Activated CD4-positive, alpha-beta T cell treated with anti-CD3 and anti-CD28 coated beads, Interleukin-2, amount 10 ng/mL, durations not matched to agents 7 days and 5 days (primary cell): ENCODE measurements at regions of chr12 and their contacts with region 1.

Region 1: GRCh38 chr12:54419088-54419892 is at the start of gene ITGA5:
- DNase-seq: peak; percentile 36
- H3K4me3 Mint-ChIP-seq: peak within 1 kb of the TSS; percentile 98
- H3K27ac Mint-ChIP-seq: peak within 1 kb of the TSS; percentile 94
- H3K4me1 Mint-ChIP-seq: peaks cover 57% of the 10 kb centered on the region
- H3K27me3 Mint-ChIP-seq: peaks cover 32% of the 10 kb centered on the region
- total RNA-seq, gene ITGA5: 83.5 to 88.7 TPM

Region 2: GRCh38 chr12:54386403-54387113 is 32.7 kb before region 1 on chr12:
- CTCF ChIA-PET with region 1: no interaction called
- POLR2A ChIA-PET with region 1: no interaction called
- DNase-seq: no peak
- H3K4me3 Mint-ChIP-seq: no peak overlapping the region
- H3K27ac Mint-ChIP-seq: no peak overlapping the region
- H3K4me1 Mint-ChIP-seq: peaks cover 9% of the 10 kb centered on the region
- H3K27me3 Mint-ChIP-seq: no peaks in the 10 kb centered on the region

Region 3: GRCh38 chr12:54431911-54432814 is 12.9 kb after region 1 on chr12:
- CTCF ChIA-PET with region 1: interaction called, 24 read pairs
- POLR2A ChIA-PET with region 1: no interaction called
- DNase-seq: peak; percentile 33
- H3K4me3 Mint-ChIP-seq: peak overlapping the region; percentile 13
- H3K27ac Mint-ChIP-seq: peak overlapping the region; percentile 46
- H3K4me1 Mint-ChIP-seq: peaks cover 42% of the 10 kb centered on the region
- H3K27me3 Mint-ChIP-seq: peaks cover 19% of the 10 kb centered on the region

Region 4: DNA sequence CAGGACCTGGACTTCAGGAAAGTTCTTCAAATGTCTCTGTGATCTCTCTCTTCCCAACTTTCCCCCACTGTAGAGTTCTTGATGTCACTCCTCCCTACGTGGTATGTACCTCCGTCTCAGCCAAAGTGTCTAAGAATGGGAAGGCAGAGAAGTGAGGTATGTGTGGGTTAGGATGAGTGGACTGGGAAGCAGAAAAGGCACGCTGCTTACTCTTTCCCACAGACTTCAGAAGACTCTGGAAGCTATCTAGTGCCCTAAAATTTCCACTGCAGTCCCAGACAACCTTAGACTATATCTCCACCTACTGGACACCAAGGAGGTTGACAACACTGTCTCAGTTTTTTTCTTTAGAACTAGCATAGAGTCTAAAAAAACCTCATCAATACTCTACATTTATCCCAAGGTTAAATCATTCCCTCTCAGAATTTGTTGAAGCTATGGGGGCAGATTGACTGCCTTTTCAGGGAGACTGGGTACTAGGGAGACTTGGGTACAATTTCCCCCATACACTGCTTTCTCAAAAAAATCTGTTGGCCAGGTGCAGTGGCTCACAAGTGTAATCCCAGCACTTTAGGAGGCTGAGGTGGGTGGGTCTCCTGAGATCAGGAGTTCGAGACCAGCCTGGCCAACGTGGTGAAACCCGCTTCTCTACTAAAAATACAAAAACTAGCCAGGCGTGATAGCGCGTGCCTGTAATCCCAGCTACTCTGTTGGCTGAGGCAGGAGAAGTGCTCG is 20.4 kb after region 1 on chr12:
- CTCF ChIA-PET with region 1: interaction called, 24 read pairs
- POLR2A ChIA-PET with region 1: no interaction called
- DNase-seq: peak; percentile 17
- H3K4me3 Mint-ChIP-seq: no peak overlapping the region
- H3K27ac Mint-ChIP-seq: no peak overlapping the region
- H3K4me1 Mint-ChIP-seq: peaks cover 7% of the 10 kb centered on the region
- H3K27me3 Mint-ChIP-seq: peaks cover 7% of the 10 kb centered on the region